Activated CD4-positive, alpha-beta T cell treated with anti-CD3 and anti-CD28 coated beads, Interleukin-2, amount 10 ng/mL, durations not matched to agents 24 days and 14 days (primary cell): ENCODE measurements at regions of chr21 and their contacts with region 1.

Region 1: DNA sequence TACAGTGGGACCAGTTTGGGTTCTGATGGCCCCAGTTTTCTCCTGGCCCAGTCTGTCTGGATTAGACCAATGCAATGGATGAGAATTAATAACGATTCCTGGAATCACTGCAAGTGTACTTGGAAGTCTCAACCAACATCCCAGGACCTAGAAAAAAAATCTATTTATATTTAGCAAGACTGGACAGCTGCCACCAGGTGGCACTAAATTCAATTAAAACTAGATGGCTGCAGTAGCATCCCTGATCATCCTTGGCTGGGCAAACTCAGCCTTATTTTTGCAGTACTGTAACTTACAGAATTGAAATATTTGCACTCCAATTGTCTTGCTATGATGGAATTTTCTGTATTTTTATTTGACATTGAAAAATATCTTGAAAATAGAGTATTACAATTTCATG is 165.7 kb downstream of the NCAM2 start:
- DNase-seq: peak; percentile 83
- H3K4me3 Mint-ChIP-seq: no peak overlapping the region
- H3K27ac Mint-ChIP-seq: no peak overlapping the region
- H3K4me1 Mint-ChIP-seq: no peaks in the 10 kb centered on the region
- H3K27me3 Mint-ChIP-seq: peaks cover 5% of the 10 kb centered on the region

Region 2: DNA sequence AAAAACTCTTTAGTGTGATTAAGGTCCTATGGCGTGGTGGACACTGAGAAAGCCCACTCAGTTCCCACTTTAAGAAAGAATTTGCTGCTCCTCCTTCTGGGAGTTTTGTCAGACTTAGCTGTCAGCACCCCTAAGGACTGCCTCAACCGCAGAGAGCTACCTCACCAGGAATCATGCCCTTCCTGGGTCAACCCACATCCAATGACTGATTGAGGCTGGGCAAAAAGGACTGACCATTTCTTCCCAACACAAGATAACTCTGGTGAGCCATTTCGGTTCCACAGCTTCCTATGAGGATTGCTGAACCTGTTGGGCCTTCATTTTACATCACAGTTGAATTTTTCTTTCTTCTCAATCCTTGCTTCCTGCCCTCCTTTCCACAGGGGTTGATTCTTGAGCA is 32.2 kb after region 1 on chr21:
- intact Hi-C with region 1: loop called (anchors 5 kb)
- DNase-seq: no peak
- H3K4me3 Mint-ChIP-seq: no peak overlapping the region
- H3K27ac Mint-ChIP-seq: no peak overlapping the region
- H3K4me1 Mint-ChIP-seq: peaks cover 25% of the 10 kb centered on the region
- H3K27me3 Mint-ChIP-seq: no peaks in the 10 kb centered on the region

Region 3: GRCh38 chr21:21232320-21232719 is 68.4 kb after region 1 on chr21:
- intact Hi-C with region 1: no loop called
- DNase-seq: no peak
- H3K4me3 Mint-ChIP-seq: no peak overlapping the region
- H3K27ac Mint-ChIP-seq: no peak overlapping the region
- H3K4me1 Mint-ChIP-seq: no peaks in the 10 kb centered on the region
- H3K27me3 Mint-ChIP-seq: peaks cover 3% of the 10 kb centered on the region

Region 4: GRCh38 chr21:21268061-21268471 is 104.2 kb after region 1 on chr21:
- intact Hi-C with region 1: no loop called
- DNase-seq: no peak
- H3K4me3 Mint-ChIP-seq: no peak overlapping the region
- H3K27ac Mint-ChIP-seq: no peak overlapping the region
- H3K4me1 Mint-ChIP-seq: no peaks in the 10 kb centered on the region
- H3K27me3 Mint-ChIP-seq: no peaks in the 10 kb centered on the region

Region 5: GRCh38 chr21:21373969-21374368 is 210.1 kb after region 1 on chr21:
- intact Hi-C with region 1: loop called (anchors 2 kb)
- DNase-seq: no peak
- H3K4me3 Mint-ChIP-seq: no peak overlapping the region
- H3K27ac Mint-ChIP-seq: no peak overlapping the region
- H3K4me1 Mint-ChIP-seq: no peaks in the 10 kb centered on the region
- H3K27me3 Mint-ChIP-seq: no peaks in the 10 kb centered on the region

Region 6: DNA sequence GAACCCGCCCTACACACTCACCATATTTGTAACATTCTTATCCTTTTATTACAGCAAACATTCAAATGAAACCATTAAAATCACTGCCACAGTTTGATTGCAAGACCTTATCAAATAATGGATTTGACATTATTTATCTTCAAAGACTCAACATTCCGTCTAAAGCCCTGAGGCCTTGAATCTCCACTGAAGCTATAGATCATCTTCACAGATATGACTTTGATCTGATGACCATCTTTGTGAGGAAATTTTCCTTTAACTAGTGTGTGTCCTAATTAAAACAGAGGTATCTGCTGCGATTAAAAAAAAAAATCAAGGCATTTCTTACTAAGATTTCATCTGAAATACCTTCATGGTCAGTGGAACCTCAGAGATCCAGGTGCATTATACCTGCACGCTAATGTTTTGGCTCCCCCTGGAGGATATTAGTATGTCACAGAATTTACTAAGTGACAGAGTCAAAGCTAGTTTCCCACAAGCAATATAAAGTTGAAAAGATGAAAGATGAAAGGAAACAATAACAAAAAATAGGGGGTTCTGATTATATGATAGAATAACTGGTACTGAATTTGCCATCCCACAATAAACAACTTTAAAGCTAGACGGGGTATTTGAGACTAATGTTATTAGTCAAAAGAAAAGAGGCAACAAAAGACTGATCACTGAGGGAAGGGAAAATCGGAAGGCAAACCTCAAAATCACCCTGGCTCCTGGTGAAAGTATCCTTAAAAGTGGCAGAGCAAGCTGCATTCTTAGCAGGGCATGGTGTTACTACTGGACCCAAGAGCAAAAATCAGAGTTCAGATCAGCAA is 757.7 kb after region 1 on chr21:
- intact Hi-C with region 1: loop called (anchors 5 kb)
- DNase-seq: no peak
- H3K4me3 Mint-ChIP-seq: no peak overlapping the region
- H3K27ac Mint-ChIP-seq: no peak overlapping the region
- H3K4me1 Mint-ChIP-seq: no peaks in the 10 kb centered on the region
- H3K27me3 Mint-ChIP-seq: no peaks in the 10 kb centered on the region

Region 7: DNA sequence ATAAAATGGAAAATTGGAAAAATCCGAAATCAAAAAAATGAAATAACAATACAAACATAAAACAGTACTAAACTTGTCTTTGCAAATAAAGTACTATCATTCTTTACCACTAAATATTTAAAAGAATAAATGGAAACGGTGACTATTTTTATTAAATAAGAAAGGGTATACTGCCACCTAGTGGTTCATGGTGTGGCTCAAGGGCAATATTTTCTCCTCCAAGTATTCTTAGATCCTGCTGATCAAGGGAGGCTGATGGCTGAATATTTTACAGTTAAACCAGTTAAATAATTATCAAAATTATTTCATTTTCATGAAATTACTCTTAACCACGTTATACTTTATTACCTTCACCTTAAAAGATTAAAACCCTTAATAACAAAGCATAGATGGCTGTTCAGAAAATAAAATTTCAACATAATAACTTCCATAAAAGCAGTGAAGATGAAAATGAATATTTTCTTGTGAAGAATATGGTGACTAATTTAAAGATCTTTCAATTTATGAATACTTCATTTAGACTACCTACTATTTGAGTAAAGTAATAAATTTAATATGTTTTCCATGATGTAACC is 1628.2 kb after region 1 on chr21:
- intact Hi-C with region 1: loop called (anchors 2 kb)
- DNase-seq: peak; percentile 57
- H3K4me3 Mint-ChIP-seq: no peak overlapping the region
- H3K27ac Mint-ChIP-seq: no peak overlapping the region
- H3K4me1 Mint-ChIP-seq: no peaks in the 10 kb centered on the region
- H3K27me3 Mint-ChIP-seq: no peaks in the 10 kb centered on the region